ENCODE measurements at regions of chr5 and their contacts with region 1.

Region 1: GRCh38 chr5:154610321-154611154 is 132.5 kb upstream of the HAND1 start:
- DNase-seq: peak; percentile 69 to 87
- ATAC-seq: peak; percentile 89
- H3K4me3 ChIP-seq: no peak overlapping the region
- H3K27ac ChIP-seq: no peak overlapping the region
- H3K4me1 ChIP-seq: no peaks in the 10 kb centered on the region
- H3K27me3 ChIP-seq: no peaks in the 10 kb centered on the region

Region 2: DNA sequence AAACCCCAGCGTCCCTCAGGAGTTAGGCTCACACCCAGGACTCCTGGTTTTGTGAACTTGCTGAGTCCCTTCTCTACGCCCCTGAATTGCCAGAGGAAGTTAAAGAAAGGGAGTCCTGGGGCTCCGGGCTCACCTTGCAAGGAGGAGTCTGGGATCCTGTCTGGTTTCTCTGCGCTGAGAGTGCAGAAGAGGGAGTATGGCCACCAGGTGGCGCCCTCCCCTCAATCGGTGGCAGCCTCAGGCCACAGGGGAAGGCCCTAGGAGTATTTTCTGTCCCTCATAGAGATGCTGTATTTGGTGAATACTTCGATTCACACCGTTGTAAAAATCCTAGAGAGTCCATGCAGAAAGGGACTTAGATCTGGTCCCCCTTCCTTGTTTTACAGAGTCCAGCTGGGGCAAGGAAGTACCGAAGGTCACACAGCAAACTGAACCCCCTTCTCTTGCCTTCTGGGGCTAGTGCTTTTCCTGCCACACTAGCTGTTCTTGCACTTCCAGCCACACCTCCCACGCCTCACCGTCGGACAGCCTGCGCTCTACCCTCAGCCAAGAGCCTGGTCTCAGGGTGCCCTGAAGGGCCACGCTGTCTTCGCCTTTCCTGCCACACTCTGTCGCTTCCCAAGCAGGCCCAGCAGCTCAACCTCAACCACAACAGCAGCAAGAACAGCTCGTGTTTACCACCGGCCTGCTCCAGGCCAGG is 142.7 kb before region 1 on chr5:
- intact Hi-C with region 1: loop called (anchors 1 to 5 kb)
- DNase-seq: peak; percentile 81 to 94
- ATAC-seq: peak; percentile 88
- H3K4me3 ChIP-seq: no peak overlapping the region
- H3K27ac ChIP-seq: no peak overlapping the region
- H3K4me1 ChIP-seq: no peaks in the 10 kb centered on the region
- H3K27me3 ChIP-seq: no peaks in the 10 kb centered on the region

Measured in aorta (tissue), 5 donors.